GM12878 (cell line): ENCODE measurements at regions of chr11 and their contacts with region 1.

Region 1: GRCh38 chr11:65418711-65419459 is 3.7 kb upstream of the NEAT1 start:
- DNase-seq: peak; percentile 91
- ATAC-seq: peak; percentile 57
- H3K4me3 ChIP-seq: peak overlapping the region; percentile 79
- H3K27ac ChIP-seq: peak overlapping the region; percentile 100
- H3K4me1 ChIP-seq: peaks cover 51% of the 10 kb centered on the region
- H3K27me3 ChIP-seq: no peaks in the 10 kb centered on the region
- CTCF ChIP-seq: no peak
- EP300 ChIP-seq: peak; percentile 39 to 52; a peak in 3 of 4 replicates
- POLR2A ChIP-seq: peak; percentile 80
- RAD21 ChIP-seq: no peak

Region 2: DNA sequence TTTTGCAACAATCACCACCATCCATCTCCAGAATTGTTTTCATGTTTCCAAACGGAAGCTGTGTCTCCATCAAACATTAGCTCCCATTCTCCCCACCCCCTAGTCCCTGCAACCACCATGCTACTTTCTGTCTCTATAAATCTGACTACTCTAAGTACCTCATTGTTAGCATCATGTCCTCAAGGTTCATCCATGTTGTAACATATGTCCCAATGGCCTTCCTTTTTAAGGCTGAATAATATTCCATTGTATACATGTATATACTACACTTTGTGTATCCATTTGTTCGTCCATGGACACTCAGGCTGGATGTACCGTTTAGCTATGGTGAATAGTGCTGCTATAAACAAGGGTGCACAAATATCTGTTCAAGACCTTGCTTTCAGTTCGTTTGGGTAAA is 93.5 kb before region 1 on chr11:
- CTCF ChIA-PET with region 1: no interaction called
- POLR2A ChIA-PET with region 1: no interaction called
- RAD21 ChIA-PET with region 1: no interaction called
- SMC1A ChIA-PET with region 1: no interaction called
- in situ Hi-C with region 1: no loop called
- intact Hi-C with region 1: no loop called
- DNase-seq: no peak
- ATAC-seq: no peak
- H3K4me3 ChIP-seq: no peak overlapping the region
- H3K27ac ChIP-seq: no peak overlapping the region
- H3K4me1 ChIP-seq: peaks cover 4% of the 10 kb centered on the region; the same call in 1 of the 2 replicates
- H3K27me3 ChIP-seq: no peaks in the 10 kb centered on the region
- CTCF ChIP-seq: no peak
- EP300 ChIP-seq: no peak
- POLR2A ChIP-seq: no peak
- RAD21 ChIP-seq: no peak

Region 3: GRCh38 chr11:65382033-65382807 is 36.7 kb before region 1 on chr11 and contains the start of gene SLC25A45:
- CTCF ChIA-PET with region 1: interaction called, 34 read pairs
- POLR2A ChIA-PET with region 1: interaction called, 12 read pairs
- RAD21 ChIA-PET with region 1: interaction called, 24 read pairs
- SMC1A ChIA-PET with region 1: interaction called, 23 read pairs
- in situ Hi-C with region 1: no loop called
- intact Hi-C with region 1: loop called (anchors 2 kb)
- DNase-seq: peak; percentile 84
- ATAC-seq: peak; percentile 86
- H3K4me3 ChIP-seq: peak within 1 kb of the TSS; percentile 90
- H3K27ac ChIP-seq: peak within 1 kb of the TSS; percentile 99
- H3K4me1 ChIP-seq: peaks cover 58% of the 10 kb centered on the region
- H3K27me3 ChIP-seq: no peaks in the 10 kb centered on the region
- CTCF ChIP-seq: peak; percentile 70 to 79 (median 71)
- EP300 ChIP-seq: peak in 1 of 2 experiments; percentile 24; a peak in 1 of 4 replicates
- POLR2A ChIP-seq: peak; percentile 78
- RAD21 ChIP-seq: peak; percentile 74
- polyA plus RNA-seq, gene SLC25A45: 4.1 to 9.7 TPM

Region 4: DNA sequence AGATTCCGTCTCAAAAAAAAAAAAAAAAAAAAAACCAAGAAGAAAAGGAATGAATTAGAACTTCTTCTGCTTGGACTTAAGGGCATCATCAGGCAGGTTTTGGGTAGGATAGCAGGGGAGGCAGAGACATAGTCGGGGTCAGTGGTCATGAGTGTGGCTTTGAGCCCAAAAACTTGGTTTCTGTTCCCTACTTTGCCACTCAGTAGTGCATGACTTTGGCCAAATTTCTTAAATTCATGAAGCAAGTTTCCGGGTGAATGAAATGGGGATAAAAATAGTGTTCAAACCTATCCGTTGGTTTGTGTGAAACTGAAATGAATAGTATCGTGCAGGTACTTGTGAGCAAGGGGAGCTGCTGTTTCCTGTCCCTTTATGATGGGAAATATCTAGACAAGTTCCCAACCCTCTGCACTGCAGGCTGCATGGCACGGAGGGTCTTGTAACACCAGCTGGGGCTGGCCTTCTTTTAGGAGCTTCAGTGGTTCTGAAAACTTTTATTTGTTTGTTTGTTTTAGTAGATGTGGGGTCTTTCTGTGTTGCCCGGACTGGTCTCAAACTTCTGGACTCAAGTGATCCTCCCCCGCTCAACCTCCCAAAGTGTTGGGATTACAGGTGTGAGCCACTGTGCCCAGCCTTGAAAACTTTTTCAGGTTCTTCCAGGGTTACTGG is 22.1 kb after region 1 on chr11:
- CTCF ChIA-PET with region 1: interaction called, 9 read pairs
- POLR2A ChIA-PET with region 1: interaction called, 16 read pairs
- RAD21 ChIA-PET with region 1: interaction called, 13 read pairs
- SMC1A ChIA-PET with region 1: interaction called, 12 read pairs
- in situ Hi-C with region 1: no loop called
- intact Hi-C with region 1: loop called (anchors 2 kb)
- DNase-seq: peak; percentile 98
- ATAC-seq: peak; percentile 69
- H3K4me3 ChIP-seq: no peak overlapping the region
- H3K27ac ChIP-seq: peak overlapping the region; percentile 89
- H3K4me1 ChIP-seq: peaks cover 52% of the 10 kb centered on the region
- H3K27me3 ChIP-seq: no peaks in the 10 kb centered on the region
- CTCF ChIP-seq: no peak
- EP300 ChIP-seq: peak; percentile 81 to 84; a peak in 3 of 4 replicates
- POLR2A ChIP-seq: peak; percentile 47; the same call in 1 of the 2 replicates
- RAD21 ChIP-seq: no peak

Region 5: DNA sequence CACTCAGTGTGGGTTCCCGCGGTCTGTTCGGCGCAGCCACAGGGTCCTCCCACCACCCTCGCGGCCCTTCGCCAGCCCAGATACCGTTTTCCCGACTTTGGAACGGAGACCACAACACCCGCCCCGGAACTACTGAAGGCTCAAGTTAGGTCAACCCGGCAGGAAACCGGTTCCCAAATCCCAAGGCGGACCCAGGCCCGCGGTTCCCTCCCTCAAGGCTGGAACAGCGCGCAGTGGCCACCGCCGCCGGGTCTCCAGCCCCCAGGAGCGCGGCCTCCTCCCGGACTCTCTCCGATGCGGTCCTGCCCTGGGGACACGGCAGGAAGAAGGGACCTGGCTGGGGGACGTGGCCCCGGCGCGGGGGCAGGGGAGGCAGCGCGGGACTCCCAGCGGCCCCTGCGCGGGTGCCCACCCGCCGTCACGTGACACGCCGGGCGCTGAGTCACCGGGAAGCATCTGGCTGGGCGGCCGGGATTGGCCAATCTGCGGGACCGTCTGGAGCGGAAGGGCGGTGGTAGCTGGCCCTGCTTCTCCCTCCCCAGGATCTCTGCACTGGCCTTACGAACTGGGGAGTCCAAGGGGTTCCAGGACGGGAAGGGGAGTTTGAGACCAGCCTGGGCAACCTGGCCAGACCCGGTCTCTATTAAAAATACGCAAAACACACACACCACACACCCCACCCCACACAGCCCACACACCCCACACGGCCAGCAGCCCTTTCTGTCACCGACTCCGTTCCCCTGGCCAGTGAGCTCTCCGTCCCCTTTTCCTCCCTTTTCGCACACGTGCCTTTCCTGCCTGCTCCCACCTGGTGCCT is 58.5 kb after region 1 on chr11:
- CTCF ChIA-PET with region 1: interaction called, 362 read pairs
- POLR2A ChIA-PET with region 1: interaction called, 29 read pairs
- RAD21 ChIA-PET with region 1: interaction called, 224 read pairs
- SMC1A ChIA-PET with region 1: interaction called, 232 read pairs
- in situ Hi-C with region 1: no loop called
- intact Hi-C with region 1: no loop called
- DNase-seq: no peak
- ATAC-seq: peak; percentile 88
- H3K4me3 ChIP-seq: peak overlapping the region; percentile 79
- H3K27ac ChIP-seq: peak overlapping the region; percentile 100
- H3K4me1 ChIP-seq: peaks cover 26% of the 10 kb centered on the region
- H3K27me3 ChIP-seq: no peaks in the 10 kb centered on the region
- CTCF ChIP-seq: no peak
- EP300 ChIP-seq: 0 out of 4 replicates have a peak, but pooled peaks of 1 of the 2 experiments have one; percentile 26
- POLR2A ChIP-seq: peak; percentile 91
- RAD21 ChIP-seq: no peak

Region 6: GRCh38 chr11:65506770-65507505 is 88.1 kb after region 1 on chr11:
- CTCF ChIA-PET with region 1: interaction called, 180 read pairs
- POLR2A ChIA-PET with region 1: interaction called, 323 read pairs
- RAD21 ChIA-PET with region 1: interaction called, 282 read pairs
- SMC1A ChIA-PET with region 1: interaction called, 131 read pairs
- in situ Hi-C with region 1: loop called (anchors 5 kb)
- intact Hi-C with region 1: loop called (anchors 1 kb)
- DNase-seq: no peak
- ATAC-seq: peak; percentile 61
- H3K4me3 ChIP-seq: no peak overlapping the region
- H3K27ac ChIP-seq: peak overlapping the region; percentile 28
- H3K4me1 ChIP-seq: peaks cover 10% of the 10 kb centered on the region; the same call in 1 of the 2 replicates
- H3K27me3 ChIP-seq: no peaks in the 10 kb centered on the region
- CTCF ChIP-seq: no peak
- EP300 ChIP-seq: peak in 1 of 2 experiments; percentile 31; a peak in 1 of 4 replicates
- POLR2A ChIP-seq: peak; percentile 79
- RAD21 ChIP-seq: no peak

Region 7: DNA sequence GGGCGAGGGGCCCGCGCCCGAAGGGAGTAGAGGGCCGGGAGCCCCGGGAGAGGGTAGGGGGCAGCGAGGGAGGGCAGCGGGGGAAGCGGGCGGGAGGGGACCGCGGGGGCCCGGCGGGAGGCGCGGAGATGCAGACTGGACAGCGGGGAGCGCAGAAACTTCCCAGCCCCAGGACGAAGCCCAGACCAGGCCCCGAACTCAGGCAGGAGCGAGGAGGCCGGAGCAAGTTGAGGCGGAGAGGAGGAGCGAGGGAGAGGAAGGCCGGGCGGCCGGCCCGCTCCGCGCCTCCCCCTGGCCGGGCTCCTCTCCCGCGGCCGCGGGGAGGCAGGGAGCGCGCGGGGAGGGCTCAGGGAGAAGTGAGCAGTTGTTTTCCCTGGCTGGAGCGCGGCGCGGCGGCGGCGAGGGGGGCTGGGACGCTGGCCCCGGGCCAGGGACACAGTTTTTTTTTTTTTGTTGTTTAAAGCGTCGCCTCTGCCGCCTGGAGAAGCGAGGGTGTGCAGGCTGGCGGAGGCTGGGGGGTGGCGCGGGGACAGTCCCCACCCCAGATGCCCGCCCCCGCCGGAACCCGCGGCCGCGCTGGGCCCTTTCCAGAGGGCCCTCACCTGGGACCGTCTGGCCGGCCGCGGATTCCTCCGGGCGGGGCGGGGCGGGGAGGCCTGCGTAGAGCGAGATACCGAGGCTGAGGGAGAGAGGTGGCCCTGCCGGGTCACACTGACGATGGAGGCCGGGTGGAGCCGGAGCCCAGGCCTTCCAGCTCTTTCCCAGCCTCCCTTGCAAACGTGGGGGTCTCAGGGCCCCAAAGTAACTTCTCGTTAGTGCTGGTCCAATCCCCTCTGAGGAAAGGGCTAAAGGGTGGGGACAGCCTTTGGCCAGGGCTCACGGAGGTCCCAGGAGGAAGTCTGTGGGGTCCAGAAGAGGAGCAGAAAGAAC is 139.4 kb after region 1 on chr11 and contains the start of gene LTBP3:
- CTCF ChIA-PET with region 1: no interaction called
- POLR2A ChIA-PET with region 1: no interaction called
- RAD21 ChIA-PET with region 1: no interaction called
- SMC1A ChIA-PET with region 1: no interaction called
- in situ Hi-C with region 1: no loop called
- intact Hi-C with region 1: no loop called
- DNase-seq: no peak
- ATAC-seq: peak; percentile 79
- H3K4me3 ChIP-seq: peak within 1 kb of the TSS; percentile 64; the same call in 1 of the 2 replicates
- H3K27ac ChIP-seq: no peak within 1 kb of the TSS
- H3K4me1 ChIP-seq: no peaks in the 10 kb centered on the region
- H3K27me3 ChIP-seq: no peaks in the 10 kb centered on the region; a peak in 2 of 4 replicates
- CTCF ChIP-seq: no peak
- EP300 ChIP-seq: no peak
- POLR2A ChIP-seq: no peak
- RAD21 ChIP-seq: no peak
- polyA plus RNA-seq, gene LTBP3: not detected